ENCODE measurements at regions of chr1 and their contacts with region 1.

Region 1: DNA sequence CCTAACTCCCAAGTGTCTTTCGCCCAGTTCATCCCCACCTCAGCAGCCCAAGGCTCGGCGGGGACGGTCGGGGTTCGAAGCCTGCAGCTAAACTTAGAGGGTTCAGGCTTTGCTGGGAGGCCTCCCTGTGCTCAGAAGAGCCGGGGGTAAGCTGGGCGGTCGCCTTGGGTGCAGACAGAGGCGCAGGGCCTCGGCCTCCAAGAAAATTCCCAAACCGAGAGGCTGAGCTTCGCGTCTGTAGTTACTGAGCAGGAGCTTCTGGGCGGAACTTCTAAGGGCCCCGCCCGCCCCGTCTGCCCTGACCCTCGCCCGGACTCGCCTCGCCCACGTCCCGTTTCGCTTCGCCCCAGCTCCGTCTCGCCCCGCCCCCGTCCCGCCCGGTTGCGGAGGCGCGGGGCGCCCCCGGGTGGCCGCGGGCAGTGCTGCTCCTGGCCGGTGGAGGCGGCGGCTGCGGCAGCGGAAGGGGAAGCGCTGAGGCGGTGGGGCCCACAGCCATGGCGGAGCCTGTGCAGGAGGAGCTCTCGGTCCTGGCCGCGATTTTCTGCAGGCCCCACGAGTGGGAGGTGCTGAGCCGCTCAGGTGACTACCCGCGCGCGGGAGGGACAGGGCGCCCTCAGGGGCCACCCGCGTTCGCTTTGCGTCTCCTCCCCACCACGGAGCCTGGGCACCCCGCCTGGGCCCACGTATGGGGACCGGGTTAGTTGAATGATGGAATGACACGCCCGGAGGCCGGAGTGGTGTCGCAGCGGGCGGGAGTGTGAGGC is at the start of gene RWDD3:
- DNase-seq: peak; percentile 97
- total RNA-seq, gene RWDD3: 24.8 TPM

Region 2: GRCh38 chr1:94854458-94855306 is 379.2 kb before region 1 on chr1:
- intact Hi-C with region 1: loop called (anchors 5 kb)
- DNase-seq: peak; percentile 93

Region 3: DNA sequence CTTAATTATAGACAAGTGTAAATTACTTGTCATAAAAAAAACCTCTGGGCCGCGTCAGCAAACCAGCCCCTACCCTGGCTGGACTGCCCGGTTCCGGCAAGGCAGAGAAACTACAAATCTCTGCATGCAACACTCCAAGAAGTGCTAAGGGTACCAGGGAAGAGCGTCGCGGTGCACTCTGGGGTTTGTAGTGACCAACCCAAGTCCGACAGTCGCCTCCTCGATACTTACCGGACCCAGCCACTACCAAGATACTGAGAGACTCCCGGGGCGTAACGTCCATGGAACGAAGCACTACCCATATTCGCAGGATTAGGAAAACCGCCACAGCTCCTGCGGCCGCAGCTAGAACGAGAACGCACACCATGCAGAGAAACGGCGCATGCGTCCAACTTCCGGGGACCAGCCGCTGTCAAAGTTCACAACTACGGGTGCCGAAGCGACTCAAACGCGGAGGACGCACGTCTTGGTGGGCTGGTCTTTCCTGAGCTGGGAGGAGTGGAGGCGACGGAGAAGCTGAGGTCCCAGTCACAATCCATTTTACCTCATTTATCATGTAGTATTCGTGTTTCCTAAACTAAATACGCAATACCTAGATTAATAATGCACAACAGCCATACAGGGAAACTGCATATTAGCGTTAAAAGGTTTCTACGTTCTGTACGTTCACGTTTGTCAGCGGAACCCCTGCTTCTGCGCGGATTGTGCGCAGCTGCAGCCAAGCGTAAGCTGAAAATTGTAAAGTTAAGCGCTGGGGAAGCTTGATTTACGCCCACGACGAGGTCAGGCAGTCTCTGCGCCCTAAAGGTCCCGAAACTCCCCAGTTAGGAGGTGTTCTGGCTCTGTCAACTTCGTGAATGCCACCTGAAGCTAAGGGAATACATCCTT is 161.1 kb before region 1 on chr1 and contains the start of gene ALG14:
- intact Hi-C with region 1: loop called (anchors 2 kb)
- DNase-seq: peak; percentile 96
- total RNA-seq, gene ALG14: 4.7 TPM

Region 4: GRCh38 chr1:95084317-95085176 is 149.4 kb before region 1 on chr1:
- intact Hi-C with region 1: loop called (anchors 1 kb)
- DNase-seq: no peak

Region 5: GRCh38 chr1:95116580-95117206 is 117.2 kb before region 1 on chr1:
- intact Hi-C with region 1: loop called (anchors 1 kb)
- DNase-seq: peak; percentile 81

Region 6: GRCh38 chr1:95197616-95198252 is 36.2 kb before region 1 on chr1:
- intact Hi-C with region 1: loop called (anchors 2 kb)
- DNase-seq: no peak

Region 7: GRCh38 chr1:95209291-95209690 is 24.6 kb before region 1 on chr1:
- intact Hi-C with region 1: no loop called
- DNase-seq: no peak

Region 8: GRCh38 chr1:95257758-95258157 is 23.8 kb after region 1 on chr1:
- intact Hi-C with region 1: no loop called
- DNase-seq: no peak

Measured in cardiac septum (tissue), 1 donor.